Upper lobe of right lung (tissue), 1 donor: ENCODE measurements at regions of chr6 and their contacts with region 1.

Region 1: DNA sequence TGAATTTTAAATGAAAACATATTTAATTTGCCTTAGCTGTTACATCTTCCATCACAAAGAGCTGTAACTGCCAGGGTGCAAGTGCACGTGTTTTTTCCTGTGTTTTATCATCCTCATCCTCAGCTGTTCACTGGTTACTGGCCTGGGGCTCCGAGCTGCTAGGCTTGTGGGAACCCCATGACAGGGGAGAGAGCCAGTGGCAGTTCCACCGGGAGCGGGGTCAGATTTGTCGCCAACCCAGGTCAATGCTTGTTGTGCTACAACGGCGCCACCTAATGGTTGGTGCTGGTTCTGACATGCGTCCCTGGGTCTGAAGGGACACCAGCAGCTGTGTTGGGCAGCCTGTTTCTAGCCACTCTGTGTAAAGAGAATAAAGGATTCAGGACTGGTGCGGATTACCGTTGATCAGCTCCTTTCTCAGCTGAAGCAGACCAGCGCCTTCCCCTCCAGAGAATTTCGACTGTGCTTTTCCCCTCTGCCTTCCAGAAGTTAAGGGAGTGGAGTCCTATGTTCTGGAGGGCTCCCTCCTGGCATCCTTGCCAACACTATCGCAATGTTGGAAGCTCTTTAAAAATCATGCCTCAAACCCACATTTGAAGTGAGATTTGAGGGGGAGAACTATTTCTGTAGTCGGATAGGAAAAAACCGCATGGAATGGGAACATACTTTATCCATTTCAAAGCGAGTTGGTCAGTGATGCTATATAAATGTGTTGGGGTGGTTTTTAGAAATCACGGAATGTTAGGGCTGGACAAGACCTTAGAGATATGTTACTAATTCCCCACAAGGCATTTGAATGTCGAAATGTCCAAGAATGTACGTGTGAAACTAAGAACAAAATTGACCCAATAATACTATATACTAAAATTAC is 32.1 kb downstream of the SUMO4 start:
- DNase-seq: peak; percentile 92
- ATAC-seq: peak; percentile 98
- H3K4me3 ChIP-seq: no peak overlapping the region
- H3K27ac ChIP-seq: no peak overlapping the region
- H3K4me1 ChIP-seq: peaks cover 3% of the 10 kb centered on the region
- H3K27me3 ChIP-seq: no peaks in the 10 kb centered on the region
- CTCF ChIP-seq: peak; percentile 94

Region 2: GRCh38 chr6:149032599-149033405 is 399.3 kb before region 1 on chr6:
- intact Hi-C with region 1: loop called (anchors 10 kb)
- DNase-seq: no peak
- ATAC-seq: peak; percentile 16
- H3K4me3 ChIP-seq: no peak overlapping the region
- H3K27ac ChIP-seq: peak overlapping the region; percentile 30
- H3K4me1 ChIP-seq: peaks cover 3% of the 10 kb centered on the region
- H3K27me3 ChIP-seq: no peaks in the 10 kb centered on the region
- CTCF ChIP-seq: no peak

Region 3: DNA sequence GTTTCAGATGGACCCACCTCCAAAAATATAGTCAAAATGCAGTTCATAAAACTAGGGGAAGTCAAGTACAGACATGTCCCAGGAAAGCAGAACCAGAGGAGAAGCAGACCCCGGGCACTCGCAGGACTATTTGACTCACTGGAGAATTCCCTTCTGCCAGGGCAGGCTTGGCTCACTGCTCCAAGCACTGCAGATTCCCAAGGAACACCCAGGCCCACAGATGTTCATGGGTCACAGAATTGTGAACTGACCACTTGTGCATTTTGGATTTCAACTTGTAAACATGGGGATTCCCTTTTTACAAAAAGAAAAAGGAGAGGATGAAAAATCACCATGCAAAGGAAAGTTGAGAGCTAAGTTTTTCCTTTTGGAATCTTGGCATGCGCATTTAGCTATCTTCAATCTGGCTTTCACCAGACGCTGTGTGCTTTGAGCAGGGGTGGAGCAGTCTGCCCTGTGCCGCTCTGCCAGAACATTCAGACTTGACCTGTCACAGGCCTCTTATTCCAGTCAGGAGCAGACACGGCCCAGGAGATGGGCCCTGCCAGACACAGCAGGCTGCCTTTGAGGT is 352.1 kb before region 1 on chr6:
- intact Hi-C with region 1: loop called (anchors 5 kb)
- DNase-seq: no peak
- ATAC-seq: peak; percentile 76
- H3K4me3 ChIP-seq: no peak overlapping the region
- H3K27ac ChIP-seq: peak overlapping the region; percentile 14
- H3K4me1 ChIP-seq: peaks cover 7% of the 10 kb centered on the region
- H3K27me3 ChIP-seq: no peaks in the 10 kb centered on the region
- CTCF ChIP-seq: no peak

Region 4: DNA sequence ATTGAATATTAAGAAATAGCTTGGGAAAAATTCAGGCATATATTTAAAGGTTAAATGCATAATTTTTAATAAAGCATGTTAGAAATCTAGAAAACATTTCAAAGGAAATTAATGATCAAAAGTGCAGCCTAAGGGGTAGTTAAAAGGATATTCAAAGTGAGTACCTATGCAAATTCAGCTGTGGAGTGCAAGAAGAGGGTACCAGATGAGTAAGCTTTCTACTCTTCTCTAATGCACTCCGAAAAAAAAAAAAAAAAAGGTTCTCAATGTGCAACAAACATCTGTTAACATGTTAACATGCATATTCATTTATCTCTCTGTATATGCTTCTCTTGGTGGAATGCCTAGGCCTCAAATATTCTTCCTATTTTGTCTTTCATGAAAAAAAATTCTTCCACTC is 248.4 kb after region 1 on chr6:
- intact Hi-C with region 1: no loop called
- DNase-seq: no peak
- ATAC-seq: no peak
- H3K4me3 ChIP-seq: no peak overlapping the region
- H3K27ac ChIP-seq: no peak overlapping the region
- H3K4me1 ChIP-seq: no peaks in the 10 kb centered on the region
- H3K27me3 ChIP-seq: no peaks in the 10 kb centered on the region
- CTCF ChIP-seq: no peak